ENCODE measurements at regions of chr16 and their contacts with region 1.

Region 1: DNA sequence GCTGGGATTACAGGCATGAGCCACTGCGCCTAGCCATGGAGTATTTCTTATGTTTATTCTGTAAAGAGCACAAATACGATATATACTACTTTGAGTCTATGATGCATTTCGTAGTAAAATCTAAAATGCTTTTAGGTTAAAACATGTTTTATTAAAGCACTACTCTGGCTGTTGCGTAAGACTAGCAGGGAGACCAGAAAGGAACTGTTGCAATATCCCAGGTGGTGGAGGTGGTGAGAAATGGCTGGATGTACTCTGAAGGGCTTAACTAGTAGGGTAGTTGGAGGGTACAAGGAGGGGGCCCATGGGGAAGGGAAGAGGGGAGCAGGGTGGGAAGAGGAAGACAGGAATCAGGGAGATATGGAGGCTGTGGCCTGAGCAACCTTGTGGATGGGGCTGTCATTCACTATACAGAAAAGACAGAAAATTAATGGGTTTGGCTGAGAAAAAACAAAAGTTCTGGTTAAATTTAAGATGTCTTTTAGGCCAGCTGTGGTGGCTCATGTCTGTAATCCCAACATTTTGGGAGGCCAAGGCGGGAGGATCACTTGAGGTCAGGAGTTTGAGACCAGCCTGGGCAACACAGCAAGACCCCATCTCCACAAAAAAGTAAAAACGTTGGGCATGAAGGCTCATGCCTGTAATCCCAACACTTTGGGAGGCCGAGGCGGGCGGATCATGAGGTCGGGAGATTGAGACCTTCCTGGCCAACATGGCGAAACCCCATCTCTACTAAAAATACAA is 35.8 kb downstream of the ST3GAL2 start:
- DNase-seq: no peak
- ATAC-seq: no peak
- H3K4me3 Mint-ChIP-seq: no peak overlapping the region
- H3K27ac Mint-ChIP-seq: no peak overlapping the region
- H3K4me1 Mint-ChIP-seq: peaks cover 33% of the 10 kb centered on the region
- H3K27me3 Mint-ChIP-seq: no peaks in the 10 kb centered on the region

Region 2: GRCh38 chr16:70342016-70342415 is 61.1 kb before region 1 on chr16:
- CTCF ChIA-PET with region 1: no interaction called
- POLR2A ChIA-PET with region 1: no interaction called
- intact Hi-C with region 1: no loop called
- DNase-seq: no peak
- ATAC-seq: no peak
- H3K4me3 Mint-ChIP-seq: no peak overlapping the region
- H3K27ac Mint-ChIP-seq: no peak overlapping the region
- H3K4me1 Mint-ChIP-seq: peaks cover 8% of the 10 kb centered on the region
- H3K27me3 Mint-ChIP-seq: no peaks in the 10 kb centered on the region

Region 3: DNA sequence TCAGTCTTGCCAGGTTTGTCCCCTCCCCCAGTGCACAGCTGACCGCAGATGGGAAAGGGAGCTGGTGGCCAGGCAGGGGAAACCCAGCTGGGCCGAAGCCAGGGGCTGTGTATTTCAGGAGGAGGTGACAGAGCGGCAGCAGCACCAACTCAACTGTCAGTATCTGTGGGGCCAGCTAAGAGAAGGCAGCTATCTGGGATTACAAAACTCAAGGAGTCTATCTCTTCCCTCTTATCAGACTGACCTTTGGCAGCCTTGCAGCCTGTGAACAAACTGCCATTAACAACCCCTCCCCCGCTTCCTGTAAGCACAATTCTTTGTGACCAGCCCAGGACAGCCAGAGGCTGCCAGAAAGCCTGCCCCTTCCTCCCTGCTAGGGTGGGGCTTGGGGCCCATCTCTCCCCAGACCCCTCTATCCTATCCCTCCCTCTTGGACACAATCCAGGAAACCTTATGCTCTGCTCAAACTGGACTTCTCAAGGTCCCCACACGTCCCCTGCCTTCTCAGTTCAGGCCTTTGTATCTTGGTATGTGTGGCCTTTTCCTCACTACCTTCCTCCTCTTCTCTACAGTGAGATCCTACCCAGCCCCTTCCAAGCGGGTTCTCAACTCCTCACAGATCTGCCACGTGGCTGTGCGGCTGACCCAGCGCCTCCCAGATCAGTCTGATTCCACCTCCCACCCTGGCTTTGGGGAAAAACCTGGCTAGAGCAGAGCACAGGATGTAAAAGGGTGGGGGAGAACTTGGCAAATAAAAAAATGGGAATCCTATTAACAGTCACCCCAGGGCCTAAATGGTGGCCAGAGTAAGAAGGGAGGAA is 25.3 kb after region 1 on chr16:
- CTCF ChIA-PET with region 1: no interaction called
- POLR2A ChIA-PET with region 1: no interaction called
- intact Hi-C with region 1: loop called in 1 of 2 experiments (anchors 2 kb)
- DNase-seq: peak; percentile 85
- ATAC-seq: peak; percentile 63
- H3K4me3 Mint-ChIP-seq: no peak overlapping the region
- H3K27ac Mint-ChIP-seq: peak overlapping the region; percentile 90
- H3K4me1 Mint-ChIP-seq: peaks cover 57% of the 10 kb centered on the region
- H3K27me3 Mint-ChIP-seq: no peaks in the 10 kb centered on the region

Region 4: DNA sequence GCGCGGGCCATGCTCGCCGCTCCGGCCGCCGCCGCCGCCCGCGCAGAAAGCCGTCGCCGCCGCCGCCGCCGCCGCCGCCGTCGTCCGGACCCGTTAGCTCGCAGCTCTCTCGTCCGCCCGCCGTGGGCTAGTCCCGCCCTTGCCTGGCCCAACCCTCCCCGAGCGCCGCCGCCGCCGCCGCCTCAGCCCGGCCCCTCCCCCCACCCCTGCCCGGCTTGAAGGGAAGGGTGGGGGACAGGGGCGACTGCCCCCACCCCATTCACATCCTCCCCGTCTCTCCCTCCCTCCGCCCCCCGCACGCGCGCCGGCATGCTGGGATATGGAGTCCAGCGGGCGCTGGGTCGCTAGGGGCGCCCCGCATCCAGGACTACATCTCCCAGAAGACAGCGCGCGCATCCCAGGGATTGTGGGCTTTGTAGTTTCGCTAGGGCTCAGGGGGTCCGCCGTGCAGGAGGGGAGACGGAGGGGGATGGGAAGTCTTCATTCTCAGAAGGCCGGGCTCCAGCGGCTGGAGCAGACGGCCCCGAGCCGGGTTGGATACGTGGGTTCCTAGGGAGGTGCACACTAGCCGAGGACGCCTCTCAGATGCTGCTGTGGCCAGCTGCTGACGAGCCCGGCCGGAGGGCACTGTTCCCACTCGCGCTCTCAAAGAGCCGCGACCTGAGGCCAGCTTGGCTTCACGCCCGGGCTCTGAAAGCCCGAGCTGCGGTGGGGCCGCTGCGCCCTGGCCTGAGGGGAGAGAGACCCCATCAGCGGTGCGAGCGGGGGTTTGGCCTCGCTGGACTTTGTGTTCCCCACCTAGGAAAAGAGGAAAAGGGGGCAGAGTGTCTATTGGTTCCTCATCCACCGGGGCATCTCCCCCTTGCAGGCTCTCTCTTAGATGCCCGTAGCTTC is 36.1 kb after region 1 on chr16 and contains the start of gene ST3GAL2:
- CTCF ChIA-PET with region 1: interaction called, 3 read pairs
- POLR2A ChIA-PET with region 1: no interaction called
- intact Hi-C with region 1: loop called (anchors 1 to 5 kb)
- DNase-seq: peak; percentile 97
- ATAC-seq: peak; percentile 97
- H3K4me3 Mint-ChIP-seq: peak within 1 kb of the TSS; percentile 96
- H3K27ac Mint-ChIP-seq: peak within 1 kb of the TSS; percentile 89
- H3K4me1 Mint-ChIP-seq: peaks cover 33% of the 10 kb centered on the region
- H3K27me3 Mint-ChIP-seq: no peaks in the 10 kb centered on the region
- total RNA-seq, gene ST3GAL2: 14.8 to 16.6 TPM

Region 5: GRCh38 chr16:70478912-70479341 is 75.8 kb after region 1 on chr16:
- CTCF ChIA-PET with region 1: interaction called, 3 read pairs
- POLR2A ChIA-PET with region 1: no interaction called
- intact Hi-C with region 1: loop called (anchors 1 to 5 kb)
- DNase-seq: no peak
- ATAC-seq: no peak
- H3K4me3 Mint-ChIP-seq: no peak overlapping the region
- H3K27ac Mint-ChIP-seq: peak overlapping the region; percentile 19
- H3K4me1 Mint-ChIP-seq: peaks cover 26% of the 10 kb centered on the region
- H3K27me3 Mint-ChIP-seq: no peaks in the 10 kb centered on the region

Measured in activated CD4-positive, alpha-beta T cell treated with anti-CD3 and anti-CD28 coated beads for 36 hours (primary cell).